Sciatic nerve (tissue), 2 donors: ENCODE measurements at regions of chr1 and their contacts with region 1.

Region 1: GRCh38 chr1:25572708-25573600 is 29.5 kb downstream of the LDLRAP1 start:
- DNase-seq: no peak
- ATAC-seq: no peak

Region 2: GRCh38 chr1:25529518-25530185 is 43.3 kb before region 1 on chr1:
- intact Hi-C with region 1: loop called (anchors 2 kb)
- DNase-seq: no peak
- ATAC-seq: no peak

Region 3: DNA sequence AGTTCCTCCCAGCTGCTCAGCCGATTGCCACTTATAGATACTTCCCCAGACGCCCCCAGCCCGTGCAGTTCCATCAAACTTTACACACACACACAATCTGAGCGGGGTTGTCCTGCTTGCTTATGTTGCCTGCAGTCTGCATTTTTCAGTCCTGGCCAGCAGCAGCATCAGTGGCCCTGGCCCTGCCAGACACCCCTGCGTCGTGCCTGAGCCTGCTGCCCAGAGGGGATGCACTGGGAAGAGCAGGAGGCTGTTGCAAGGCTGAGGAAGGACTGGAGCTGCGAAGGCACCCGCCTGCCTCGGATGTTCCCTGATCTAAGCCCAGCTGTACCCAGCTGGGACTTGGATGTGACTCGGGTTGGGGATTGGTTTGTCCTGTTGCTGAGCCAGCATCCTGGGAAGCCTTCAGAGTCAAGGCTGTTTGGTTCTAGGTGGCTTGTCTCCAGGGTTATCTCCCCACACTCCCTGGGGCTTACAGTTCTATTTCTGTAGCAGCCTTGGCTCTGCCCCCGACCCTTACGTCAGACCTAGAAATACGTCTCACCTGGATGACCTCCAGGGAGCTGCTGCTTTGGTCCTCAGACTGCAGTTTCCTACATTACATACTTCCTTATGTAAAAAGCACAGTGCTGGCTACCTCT is 86.0 kb after region 1 on chr1:
- intact Hi-C with region 1: no loop called
- DNase-seq: no peak
- ATAC-seq: peak; percentile 33